IMR-90 (cell line): ENCODE measurements at regions of chr12 and their contacts with region 1.

Region 1: DNA sequence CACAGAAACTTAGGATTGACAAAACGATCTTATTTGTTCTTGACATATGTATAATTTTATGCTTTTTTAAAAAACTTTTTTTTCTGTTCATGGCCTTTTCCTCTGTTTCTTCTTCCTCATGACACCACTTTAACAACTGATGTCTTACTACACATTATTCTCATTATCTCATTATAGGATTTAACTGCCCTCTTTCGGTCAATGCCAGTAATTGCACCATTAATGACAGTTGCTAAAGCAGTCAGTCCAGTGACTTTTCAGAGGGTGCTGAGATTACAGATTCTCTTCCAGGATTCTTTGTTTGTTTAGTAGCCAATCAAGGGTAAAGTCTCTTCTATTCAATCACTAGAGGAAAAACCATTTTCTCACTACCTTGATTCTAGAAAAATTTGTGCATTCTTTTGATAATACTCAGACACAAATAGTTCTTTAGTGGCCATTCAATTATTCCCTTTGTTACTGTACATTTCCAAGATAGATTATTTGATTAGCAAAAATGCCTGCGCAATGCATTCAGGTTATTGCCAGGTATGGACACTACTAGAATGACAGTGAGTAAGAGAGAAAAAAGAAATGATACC is 50.1 kb downstream of the KLRG1 start:
- DNase-seq: peak; percentile 40
- ATAC-seq: peak; percentile 90
- H3K4me3 ChIP-seq: no peak overlapping the region
- H3K27ac ChIP-seq: no peak overlapping the region
- H3K4me1 ChIP-seq: no peaks in the 10 kb centered on the region
- H3K27me3 ChIP-seq: 0 out of 2 replicates have a peak, but pooled peaks cover 2% of the 10 kb centered on the region
- CTCF ChIP-seq: peak; percentile 71
- POLR2A ChIP-seq: no peak
- RAD21 ChIP-seq: peak; percentile 64

Region 2: DNA sequence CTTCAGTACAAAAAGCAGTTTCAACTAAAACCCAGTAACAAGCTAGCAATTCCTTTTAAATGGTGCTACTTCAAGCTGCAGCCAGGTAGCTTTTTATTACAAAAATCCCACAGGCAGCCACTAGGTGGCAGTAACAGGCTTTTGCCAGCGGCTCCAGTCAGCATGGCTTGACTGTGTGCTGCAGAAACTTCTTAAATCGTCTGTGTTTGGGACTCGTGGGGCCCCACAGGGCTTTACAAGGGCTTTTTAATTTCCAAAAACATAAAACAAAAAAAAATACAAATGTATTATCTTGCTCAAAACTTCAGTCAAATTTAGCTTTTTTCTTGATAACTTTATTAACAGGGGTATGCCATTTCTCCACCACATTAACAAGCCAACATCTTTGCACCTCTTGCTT is 495.2 kb before region 1 on chr12:
- CTCF ChIA-PET with region 1: interaction called, 5 read pairs
- POLR2A ChIA-PET with region 1: no interaction called
- dilution Hi-C with region 1: no loop called
- in situ Hi-C with region 1: no loop called
- intact Hi-C with region 1: loop called (anchors 1 kb)
- DNase-seq: peak; percentile 59
- ATAC-seq: peak; percentile 86
- H3K4me3 ChIP-seq: no peak overlapping the region
- H3K27ac ChIP-seq: no peak overlapping the region
- H3K4me1 ChIP-seq: no peaks in the 10 kb centered on the region
- H3K27me3 ChIP-seq: no peaks in the 10 kb centered on the region
- CTCF ChIP-seq: peak; percentile 81
- POLR2A ChIP-seq: no peak
- RAD21 ChIP-seq: peak; percentile 54

Region 3: GRCh38 chr12:8662593-8662992 is 376.9 kb before region 1 on chr12 and contains the start of gene MFAP5:
- CTCF ChIA-PET with region 1: interaction called, 3 read pairs
- POLR2A ChIA-PET with region 1: no interaction called
- dilution Hi-C with region 1: no loop called
- in situ Hi-C with region 1: loop called (anchors 10 kb)
- intact Hi-C with region 1: loop called (anchors 2 kb)
- DNase-seq: peak; percentile 25
- ATAC-seq: no peak
- H3K4me3 ChIP-seq: no peak within 1 kb of the TSS
- H3K27ac ChIP-seq: no peak within 1 kb of the TSS
- H3K4me1 ChIP-seq: no peaks in the 10 kb centered on the region
- H3K27me3 ChIP-seq: peaks cover 12% of the 10 kb centered on the region
- CTCF ChIP-seq: no peak
- POLR2A ChIP-seq: no peak
- RAD21 ChIP-seq: no peak
- total RNA-seq, gene MFAP5: 0.56 and 0.90 TPM in 2 replicates

Region 4: DNA sequence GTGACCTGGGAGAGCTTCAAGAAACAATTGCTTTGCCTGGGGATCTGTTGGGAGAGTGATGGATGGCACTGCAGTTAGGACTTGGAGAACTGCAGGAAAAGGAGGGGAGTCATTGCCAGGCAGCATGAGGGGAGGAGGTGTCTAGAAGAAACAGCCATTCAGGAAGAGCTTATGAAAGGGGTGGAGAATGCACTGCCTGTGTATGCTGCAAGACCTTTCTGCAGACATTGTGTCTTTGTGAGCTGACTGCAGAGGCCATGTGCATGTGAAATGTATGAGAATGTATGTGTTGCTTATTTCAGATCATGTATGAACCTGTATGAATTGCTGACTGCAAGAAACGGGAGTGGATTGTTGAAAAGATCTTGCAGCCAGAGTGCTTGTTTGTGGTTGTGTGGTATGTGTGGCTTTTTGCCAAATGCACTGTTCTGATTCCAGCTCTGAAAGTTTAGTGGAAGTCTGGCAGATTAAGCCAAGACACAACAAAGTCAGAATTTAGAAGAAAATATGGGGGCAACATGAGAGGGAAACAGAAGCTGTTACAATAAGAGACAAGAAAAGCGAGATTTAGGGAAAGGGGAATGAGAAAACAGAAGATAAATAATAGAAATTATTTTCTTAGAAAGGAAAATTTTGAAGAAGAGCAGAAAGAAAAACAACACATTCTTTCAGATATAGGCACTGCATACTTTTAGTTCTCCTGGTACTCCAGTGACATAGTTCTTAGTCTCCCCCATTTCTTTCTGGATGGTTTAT is 351.5 kb before region 1 on chr12:
- CTCF ChIA-PET with region 1: no interaction called
- POLR2A ChIA-PET with region 1: no interaction called
- dilution Hi-C with region 1: no loop called
- in situ Hi-C with region 1: no loop called
- intact Hi-C with region 1: loop called (anchors 1 kb)
- DNase-seq: peak; percentile 82
- ATAC-seq: peak; percentile 85
- H3K4me3 ChIP-seq: no peak overlapping the region
- H3K27ac ChIP-seq: no peak overlapping the region
- H3K4me1 ChIP-seq: no peaks in the 10 kb centered on the region
- H3K27me3 ChIP-seq: no peaks in the 10 kb centered on the region; the same call in none of the 2 replicates
- CTCF ChIP-seq: no peak
- POLR2A ChIP-seq: no peak
- RAD21 ChIP-seq: no peak

Region 5: GRCh38 chr12:8867009-8867408 is 172.5 kb before region 1 on chr12:
- CTCF ChIA-PET with region 1: no interaction called
- POLR2A ChIA-PET with region 1: no interaction called
- dilution Hi-C with region 1: no loop called
- in situ Hi-C with region 1: no loop called
- intact Hi-C with region 1: no loop called
- DNase-seq: no peak
- ATAC-seq: no peak
- H3K4me3 ChIP-seq: no peak overlapping the region
- H3K27ac ChIP-seq: no peak overlapping the region
- H3K4me1 ChIP-seq: no peaks in the 10 kb centered on the region
- H3K27me3 ChIP-seq: no peaks in the 10 kb centered on the region
- CTCF ChIP-seq: no peak
- POLR2A ChIP-seq: no peak
- RAD21 ChIP-seq: no peak

Region 6: GRCh38 chr12:8890313-8891085 is 149.0 kb before region 1 on chr12:
- CTCF ChIA-PET with region 1: interaction called, 7 read pairs
- POLR2A ChIA-PET with region 1: no interaction called
- dilution Hi-C with region 1: no loop called
- in situ Hi-C with region 1: no loop called
- intact Hi-C with region 1: loop called (anchors 2 kb)
- DNase-seq: peak; percentile 22
- ATAC-seq: peak; percentile 95
- H3K4me3 ChIP-seq: peak overlapping the region; percentile 63
- H3K27ac ChIP-seq: no peak overlapping the region
- H3K4me1 ChIP-seq: no peaks in the 10 kb centered on the region
- H3K27me3 ChIP-seq: peaks cover 2% of the 10 kb centered on the region
- CTCF ChIP-seq: peak; percentile 73
- POLR2A ChIP-seq: no peak
- RAD21 ChIP-seq: peak; percentile 65

Region 7: DNA sequence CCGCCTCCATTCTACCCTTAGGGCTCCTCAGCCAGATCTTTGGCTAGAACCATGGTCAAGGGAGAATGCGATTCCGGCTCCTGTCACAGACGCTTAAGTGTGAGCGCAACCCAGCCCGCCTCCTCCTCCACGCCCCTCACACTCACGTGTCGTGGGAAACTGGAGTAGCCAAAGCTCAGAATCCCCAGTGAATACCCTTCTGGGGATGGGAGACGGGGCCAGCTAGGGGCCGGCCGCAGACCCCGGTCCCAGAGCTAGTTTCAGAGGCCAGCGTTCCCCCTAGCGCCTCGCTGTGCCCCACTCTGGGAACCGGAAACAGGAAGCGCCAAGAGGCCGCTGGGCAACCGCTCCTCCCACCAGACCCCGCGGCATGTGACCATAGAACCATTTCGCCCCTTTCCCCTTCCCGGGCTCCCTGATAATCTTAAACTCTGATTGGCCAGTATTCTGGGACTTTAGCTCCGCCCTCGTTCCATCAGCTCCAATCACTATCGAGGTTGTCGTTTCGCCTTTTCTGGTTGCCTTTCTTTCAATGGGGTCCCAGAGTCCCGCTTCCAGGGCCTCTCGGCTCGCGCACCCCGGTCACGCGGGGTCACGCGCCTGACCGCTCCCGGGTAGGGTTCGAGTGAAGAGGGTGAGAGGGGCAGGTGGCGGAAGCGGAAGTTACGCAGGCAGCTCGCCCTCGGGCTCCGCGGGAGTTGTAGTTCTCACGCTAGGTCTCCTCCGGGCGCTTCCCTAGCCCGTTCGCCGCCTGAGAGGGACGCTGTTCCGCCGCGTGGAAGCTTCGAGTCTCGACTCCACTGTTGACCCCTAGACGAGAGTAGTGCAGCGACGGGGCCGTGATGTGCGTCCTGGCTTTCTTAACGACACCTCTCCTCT is 89.9 kb before region 1 on chr12 and contains the start of gene M6PR:
- CTCF ChIA-PET with region 1: interaction called, 8 read pairs
- POLR2A ChIA-PET with region 1: no interaction called
- dilution Hi-C with region 1: no loop called
- in situ Hi-C with region 1: no loop called
- intact Hi-C with region 1: loop called (anchors 1 kb)
- DNase-seq: peak; percentile 92
- ATAC-seq: peak; percentile 94
- H3K4me3 ChIP-seq: peak within 1 kb of the TSS; percentile 64
- H3K27ac ChIP-seq: peak within 1 kb of the TSS; percentile 77
- H3K4me1 ChIP-seq: no peaks in the 10 kb centered on the region
- H3K27me3 ChIP-seq: no peaks in the 10 kb centered on the region
- CTCF ChIP-seq: peak; percentile 59
- POLR2A ChIP-seq: peak; percentile 84; the same call in 1 of the 2 replicates
- RAD21 ChIP-seq: peak; percentile 47
- total RNA-seq, gene M6PR: 118 and 140 TPM in 2 replicates